Activated T-helper 1 cell treated with anti-CD3 and anti-CD28 coated beads, Interleukin-12 subunit alpha, Interleukin-12 subunit beta, Interleukin-2, Interleukin-4 antibody, amounts not matched to agents 30 ng/mL and 10 ng/mL and 1 ng/mL, durations not matched to agents 14 hours and 24 hours and 36 hours (primary cell): ENCODE measurements at regions of chr14 and their contacts with region 1.

Region 1: GRCh38 chr14:70027785-70028428 is 148.7 kb downstream of the SMOC1 start:
- DNase-seq: peak; percentile 45
- H3K4me3 Mint-ChIP-seq: no peak overlapping the region
- H3K27ac Mint-ChIP-seq: no peak overlapping the region
- H3K4me1 Mint-ChIP-seq: no peaks in the 10 kb centered on the region
- H3K27me3 Mint-ChIP-seq: no peaks in the 10 kb centered on the region

Region 2: DNA sequence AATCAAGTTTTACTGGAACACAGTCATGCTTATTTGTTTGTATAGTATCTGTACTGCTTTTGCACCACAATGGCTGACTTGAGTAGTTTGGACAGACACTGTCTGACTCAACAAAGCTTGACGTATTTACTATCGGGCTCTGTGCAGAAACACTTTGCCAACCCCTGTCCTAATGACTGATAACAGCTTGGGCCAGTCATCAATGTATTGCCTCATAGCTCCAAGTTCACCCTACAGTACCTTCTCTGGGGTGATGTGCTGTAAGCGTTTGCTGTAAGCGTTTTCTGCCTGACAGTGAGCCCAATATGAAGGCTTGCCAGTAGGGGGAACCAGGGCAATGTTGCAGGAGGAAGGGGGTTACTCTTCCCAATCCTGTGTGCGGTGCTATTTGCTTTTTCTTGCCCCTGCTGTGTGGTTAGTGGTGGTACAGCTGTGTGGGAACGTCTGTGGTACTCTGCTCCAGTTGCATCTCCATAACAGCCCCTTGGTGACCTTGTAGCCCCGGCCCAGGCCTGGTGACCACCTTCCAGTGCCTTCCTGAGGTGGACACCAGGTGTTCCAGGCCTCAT is 447.8 kb before region 1 on chr14:
- intact Hi-C with region 1: loop called (anchors 1 kb)
- DNase-seq: no peak
- H3K4me3 Mint-ChIP-seq: no peak overlapping the region
- H3K27ac Mint-ChIP-seq: no peak overlapping the region
- H3K4me1 Mint-ChIP-seq: peaks cover 9% of the 10 kb centered on the region
- H3K27me3 Mint-ChIP-seq: peaks cover 38% of the 10 kb centered on the region

Region 3: DNA sequence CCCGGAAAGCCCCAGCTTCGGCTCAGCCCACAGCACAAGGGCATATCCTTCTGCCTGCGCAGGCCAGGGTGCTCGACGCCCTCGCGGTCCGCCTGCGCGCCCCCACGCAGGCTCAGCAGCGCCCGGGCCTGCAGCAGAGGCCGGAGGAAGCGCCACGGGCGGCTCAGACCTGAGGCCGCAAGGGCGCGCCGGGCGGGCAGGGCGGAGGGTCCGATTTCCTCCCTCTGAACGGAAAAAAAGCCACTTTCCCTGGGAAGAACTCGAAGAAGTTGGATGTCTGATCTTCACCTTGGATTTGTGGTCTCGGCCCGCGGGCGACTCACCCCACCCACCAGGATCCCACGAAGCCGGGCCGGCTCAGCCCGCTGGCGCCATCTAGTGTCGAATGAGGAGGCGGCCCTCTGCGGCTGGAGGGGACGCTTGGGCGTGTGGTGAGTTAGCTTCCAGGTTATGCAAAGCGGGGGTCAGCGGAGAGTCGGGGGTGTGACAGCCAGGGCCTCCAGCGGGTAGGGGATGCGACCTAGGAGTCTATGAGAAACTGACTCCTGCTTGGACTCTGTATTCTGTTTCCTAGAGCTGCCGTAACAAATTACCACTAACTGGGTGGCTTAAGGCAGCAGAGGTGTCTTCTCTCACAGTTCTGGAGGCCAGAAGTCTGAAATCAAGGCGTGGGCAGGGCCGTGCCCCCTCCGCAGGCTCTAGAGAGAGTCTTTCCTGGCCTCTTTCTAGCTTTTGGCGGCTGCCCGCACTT is 301.0 kb before region 1 on chr14:
- intact Hi-C with region 1: loop called (anchors 2 kb)
- DNase-seq: peak; percentile 76
- H3K4me3 Mint-ChIP-seq: peak overlapping the region; percentile 72
- H3K27ac Mint-ChIP-seq: peak overlapping the region; percentile 74
- H3K4me1 Mint-ChIP-seq: peaks cover 38% of the 10 kb centered on the region
- H3K27me3 Mint-ChIP-seq: no peaks in the 10 kb centered on the region

Region 4: DNA sequence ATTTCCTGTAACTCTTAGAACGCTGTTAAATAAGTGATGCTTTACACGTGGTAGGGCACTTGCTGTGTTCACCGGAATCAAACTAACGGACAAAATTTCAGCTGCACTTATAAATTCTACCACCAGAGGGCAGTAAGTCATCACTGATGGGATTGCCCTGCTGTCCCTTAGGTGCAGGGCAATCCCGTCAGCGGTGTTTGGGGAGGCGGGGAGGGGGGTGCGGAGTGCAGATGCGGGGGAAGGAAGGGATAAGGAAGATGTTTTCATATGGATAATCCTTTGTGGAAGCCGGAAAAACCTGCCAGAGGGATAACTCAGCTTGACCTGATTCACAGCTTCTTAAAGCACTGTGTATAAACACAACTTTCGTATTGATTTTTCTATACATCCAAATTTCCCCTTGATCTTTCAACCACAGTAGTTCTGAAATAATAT is 209.1 kb before region 1 on chr14:
- intact Hi-C with region 1: loop called (anchors 1 kb)
- DNase-seq: peak; percentile 53
- H3K4me3 Mint-ChIP-seq: no peak overlapping the region
- H3K27ac Mint-ChIP-seq: no peak overlapping the region
- H3K4me1 Mint-ChIP-seq: peaks cover 5% of the 10 kb centered on the region
- H3K27me3 Mint-ChIP-seq: peaks cover 8% of the 10 kb centered on the region

Region 5: GRCh38 chr14:69879175-69880043 is 148.5 kb before region 1 on chr14 and contains the start of gene SMOC1:
- intact Hi-C with region 1: loop called (anchors 5 kb)
- DNase-seq: no peak
- H3K4me3 Mint-ChIP-seq: no peak within 1 kb of the TSS
- H3K27ac Mint-ChIP-seq: no peak within 1 kb of the TSS
- H3K4me1 Mint-ChIP-seq: no peaks in the 10 kb centered on the region
- H3K27me3 Mint-ChIP-seq: peaks cover 30% of the 10 kb centered on the region
- total RNA-seq, gene SMOC1: not detected in 2 replicates

Region 6: GRCh38 chr14:70073924-70074566 is 46.1 kb after region 1 on chr14:
- intact Hi-C with region 1: loop called (anchors 2 kb)
- DNase-seq: peak; percentile 21
- H3K4me3 Mint-ChIP-seq: no peak overlapping the region
- H3K27ac Mint-ChIP-seq: no peak overlapping the region
- H3K4me1 Mint-ChIP-seq: no peaks in the 10 kb centered on the region
- H3K27me3 Mint-ChIP-seq: peaks cover 19% of the 10 kb centered on the region